Ovary (tissue), 10 donors: ENCODE measurements at regions of chr4 and their contacts with region 1.

Region 1: DNA sequence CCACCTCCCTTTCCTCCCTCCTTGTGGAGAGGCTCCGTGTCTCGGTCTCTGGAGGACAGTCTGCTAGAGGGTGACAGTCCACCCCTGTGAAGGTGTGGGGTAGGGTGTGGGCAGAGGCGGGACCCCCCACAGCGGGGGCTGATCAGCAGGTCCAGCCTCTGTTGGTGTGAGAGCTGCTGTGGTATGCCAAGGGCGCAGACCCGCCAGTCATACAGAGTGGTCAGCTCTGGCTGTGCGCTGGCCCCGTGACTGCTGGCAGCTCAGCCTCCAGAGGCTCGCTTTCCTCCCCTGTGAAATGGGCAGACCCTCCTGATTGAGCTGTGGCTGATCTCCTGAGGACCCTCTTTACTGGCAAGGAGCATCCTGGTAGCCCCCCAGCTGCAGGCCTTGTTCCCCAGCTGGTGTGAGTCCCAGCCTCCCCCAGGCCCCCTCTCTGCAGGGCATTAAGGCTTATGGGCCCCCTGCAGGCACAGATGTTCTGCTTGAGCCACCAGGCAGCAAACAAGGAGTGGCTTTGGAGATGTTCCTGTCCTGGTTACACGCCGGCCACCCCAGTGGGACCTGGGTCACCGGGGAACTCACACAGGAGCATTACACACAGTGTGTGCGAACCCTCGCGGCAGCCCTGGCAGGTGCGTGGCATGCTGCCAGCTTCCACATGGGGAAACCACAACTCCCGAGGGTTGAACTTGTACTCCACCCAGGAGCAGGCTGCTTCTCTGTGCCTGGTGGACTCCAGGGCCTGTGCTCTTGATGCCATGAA is 76.8 kb downstream of the PPP2R2C start:
- DNase-seq: no peak
- H3K4me3 ChIP-seq: no peak overlapping the region
- H3K27ac ChIP-seq: no peak overlapping the region
- H3K4me1 ChIP-seq: no peaks in the 10 kb centered on the region
- H3K27me3 ChIP-seq: no peaks in the 10 kb centered on the region
- CTCF ChIP-seq: no peak
- EP300 ChIP-seq: no peak
- POLR2A ChIP-seq: no peak

Region 2: DNA sequence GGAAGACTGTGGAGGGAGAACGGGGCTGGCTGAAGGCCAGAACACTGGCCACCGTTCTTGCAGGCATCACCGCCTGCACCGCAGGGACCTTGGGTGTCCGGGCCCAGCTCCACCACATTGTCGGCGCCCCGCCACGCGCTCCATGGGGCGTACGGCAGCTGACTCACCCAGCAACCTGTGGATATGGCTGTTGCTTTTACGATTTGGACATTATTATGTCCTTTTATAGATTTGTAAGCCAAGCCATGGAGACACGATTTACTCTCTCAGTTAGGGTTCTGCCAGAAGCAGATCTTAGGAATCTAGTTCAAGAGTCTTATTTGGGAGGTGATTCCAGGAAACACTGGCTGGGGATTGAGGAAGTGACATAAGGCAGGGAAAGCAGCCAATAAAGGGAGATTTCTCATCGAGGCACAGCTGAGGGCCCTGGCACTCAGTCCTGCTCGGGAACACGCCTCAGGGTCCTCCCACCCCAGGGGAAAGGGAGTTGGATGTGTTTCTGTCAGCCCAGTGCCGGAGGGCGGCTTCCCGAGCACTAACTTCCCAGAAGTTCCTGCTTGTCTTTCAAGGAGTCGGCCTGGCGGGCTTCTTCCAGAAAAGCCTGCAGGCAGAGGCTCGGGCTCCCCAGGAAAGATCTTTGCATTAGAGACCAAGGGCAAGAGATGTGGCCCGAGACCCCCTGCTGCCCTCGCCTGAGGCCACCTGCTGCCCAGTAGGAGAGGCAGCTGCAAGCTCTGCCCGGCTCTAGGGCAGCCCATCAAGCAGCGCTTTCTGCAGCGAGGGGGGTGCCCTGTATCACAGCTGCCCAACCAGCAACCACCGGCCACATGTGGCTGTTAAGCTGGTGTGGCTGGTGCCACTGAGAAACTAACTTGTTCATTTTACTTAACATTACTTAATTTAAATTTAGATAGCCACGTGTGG is 555.6 kb before region 1 on chr4:
- intact Hi-C with region 1: loop called in 1 of 4 experiments (anchors 5 kb)
- DNase-seq: peak in 4 of 5 donors; percentile 36 to 47 (median 41)
- H3K4me3 ChIP-seq: no peak overlapping the region
- H3K27ac ChIP-seq: no peak overlapping the region
- H3K4me1 ChIP-seq: peaks cover 4% of the 10 kb centered on the region
- H3K27me3 ChIP-seq: no peaks in the 10 kb centered on the region
- CTCF ChIP-seq: no peak
- EP300 ChIP-seq: no peak
- POLR2A ChIP-seq: no peak

Region 3: DNA sequence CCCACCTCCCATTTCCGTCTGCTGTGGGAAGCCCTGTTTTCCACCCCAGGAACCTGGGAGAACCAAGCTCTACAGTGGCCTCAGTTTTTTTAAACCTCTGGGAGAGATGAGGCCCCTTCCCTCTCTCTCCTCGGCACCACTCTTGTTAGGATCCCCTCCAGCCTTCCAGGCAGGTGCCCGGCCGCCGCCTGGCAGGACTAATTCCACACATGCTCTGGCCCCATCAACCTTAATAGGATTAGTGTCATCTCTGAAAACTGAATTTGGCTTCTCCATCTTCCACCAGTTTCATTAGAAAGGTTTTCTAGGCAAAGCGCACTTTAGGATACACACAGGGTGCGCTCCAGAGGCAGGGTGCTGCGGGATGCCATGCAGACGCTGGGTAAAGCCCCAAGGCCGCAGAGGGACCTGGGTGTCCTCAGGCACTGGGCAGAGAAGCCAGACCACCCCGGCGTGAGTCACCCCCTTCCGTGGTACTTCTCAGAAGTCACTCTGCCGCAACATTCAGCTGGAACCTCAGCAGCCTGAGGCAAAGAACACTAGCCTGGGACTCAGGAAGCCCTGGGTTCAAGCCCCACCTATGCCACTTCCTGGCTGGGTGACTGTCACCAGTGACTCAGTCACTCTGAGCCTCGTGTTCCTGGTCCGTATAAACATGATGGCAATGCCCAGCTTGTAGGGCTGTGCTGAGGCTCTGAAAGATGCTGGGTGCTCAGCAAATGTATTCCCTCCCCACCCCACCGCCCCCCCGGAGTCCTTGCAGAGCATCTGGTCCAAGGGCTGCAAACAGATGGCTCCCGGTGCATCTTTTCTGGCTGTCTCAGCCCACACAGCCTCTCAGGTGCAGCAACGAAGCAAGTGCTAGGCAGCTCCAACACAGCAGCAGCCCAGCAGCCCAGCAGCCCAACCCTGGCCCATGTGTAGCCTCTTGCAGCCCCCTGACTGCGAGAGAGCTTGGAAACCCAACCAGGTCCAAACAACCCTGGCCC is 47.7 kb after region 1 on chr4:
- intact Hi-C with region 1: no loop called
- DNase-seq: no peak
- H3K4me3 ChIP-seq: no peak overlapping the region
- H3K27ac ChIP-seq: no peak overlapping the region
- H3K4me1 ChIP-seq: peaks cover 4% of the 10 kb centered on the region
- H3K27me3 ChIP-seq: no peaks in the 10 kb centered on the region
- CTCF ChIP-seq: no peak
- EP300 ChIP-seq: no peak
- POLR2A ChIP-seq: no peak

Region 4: DNA sequence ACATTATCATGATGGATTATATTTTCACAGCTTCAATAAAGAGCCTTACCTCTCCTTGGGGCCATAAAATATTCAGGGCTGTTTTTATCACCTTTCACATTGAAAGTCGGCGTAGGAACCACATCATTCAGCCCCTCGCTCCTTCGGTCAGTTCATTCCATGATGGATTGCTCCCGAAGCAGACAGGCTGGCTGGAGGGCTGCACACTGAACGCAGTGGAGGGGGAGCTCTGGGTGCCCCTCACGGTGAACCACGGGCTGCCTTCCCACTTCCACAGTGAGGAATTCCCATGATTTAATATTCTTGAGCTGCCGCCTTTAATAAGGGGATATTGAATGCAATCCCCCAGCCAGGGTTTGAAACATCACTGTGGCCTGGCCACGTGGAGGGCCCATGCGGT is 60.8 kb after region 1 on chr4:
- intact Hi-C with region 1: loop called in 1 of 4 experiments (anchors 2 kb)
- DNase-seq: no peak
- H3K4me3 ChIP-seq: no peak overlapping the region
- H3K27ac ChIP-seq: no peak overlapping the region
- H3K4me1 ChIP-seq: no peaks in the 10 kb centered on the region
- H3K27me3 ChIP-seq: no peaks in the 10 kb centered on the region
- CTCF ChIP-seq: no peak
- EP300 ChIP-seq: no peak
- POLR2A ChIP-seq: no peak